PC-9 (cell line): ENCODE measurements at regions of chr1 and their contacts with region 1.

Region 1: GRCh38 chr1:113178522-113178921 is 105.5 kb downstream of the LRIG2 start:
- DNase-seq: no peak
- H3K4me3 ChIP-seq: no peak overlapping the region
- H3K27ac ChIP-seq: no peak overlapping the region
- H3K4me1 ChIP-seq: no peaks in the 10 kb centered on the region
- H3K27me3 ChIP-seq: no peaks in the 10 kb centered on the region
- CTCF ChIP-seq: no peak; the same call in 1 of the 2 replicates

Region 2: GRCh38 chr1:113166473-113166872 is 12.0 kb before region 1 on chr1:
- CTCF ChIA-PET with region 1: interaction called, 10 read pairs
- POLR2A ChIA-PET with region 1: no interaction called
- intact Hi-C with region 1: no loop called
- DNase-seq: no peak
- H3K4me3 ChIP-seq: no peak overlapping the region
- H3K27ac ChIP-seq: no peak overlapping the region
- H3K4me1 ChIP-seq: no peaks in the 10 kb centered on the region
- H3K27me3 ChIP-seq: no peaks in the 10 kb centered on the region
- CTCF ChIP-seq: no peak

Region 3: GRCh38 chr1:113226148-113226547 is 47.6 kb after region 1 on chr1:
- CTCF ChIA-PET with region 1: no interaction called
- POLR2A ChIA-PET with region 1: no interaction called
- intact Hi-C with region 1: no loop called
- DNase-seq: no peak
- H3K4me3 ChIP-seq: no peak overlapping the region
- H3K27ac ChIP-seq: no peak overlapping the region
- H3K4me1 ChIP-seq: no peaks in the 10 kb centered on the region
- H3K27me3 ChIP-seq: no peaks in the 10 kb centered on the region
- CTCF ChIP-seq: no peak